CD4-positive, alpha-beta T cell (primary cell): ENCODE measurements at regions of chr5 and their contacts with region 1.

Region 1: GRCh38 chr5:150436141-150436680 is 13.3 kb downstream of the RPS14 start:
- DNase-seq: peak; percentile 81 to 96 (median 90)
- ATAC-seq: peak; percentile 99
- H3K4me3 ChIP-seq: no peak overlapping the region
- H3K4me3 Mint-ChIP-seq: peak overlapping the region; percentile 42
- H3K27ac ChIP-seq: no peak overlapping the region
- H3K27ac Mint-ChIP-seq: peak overlapping the region; percentile 29
- H3K4me1 ChIP-seq: peaks cover 9% of the 10 kb centered on the region
- H3K4me1 Mint-ChIP-seq: peaks cover 7% of the 10 kb centered on the region
- H3K27me3 ChIP-seq: no peaks in the 10 kb centered on the region
- H3K27me3 Mint-ChIP-seq: no peaks in the 10 kb centered on the region
- CTCF ChIP-seq: peak; percentile 83

Region 2: DNA sequence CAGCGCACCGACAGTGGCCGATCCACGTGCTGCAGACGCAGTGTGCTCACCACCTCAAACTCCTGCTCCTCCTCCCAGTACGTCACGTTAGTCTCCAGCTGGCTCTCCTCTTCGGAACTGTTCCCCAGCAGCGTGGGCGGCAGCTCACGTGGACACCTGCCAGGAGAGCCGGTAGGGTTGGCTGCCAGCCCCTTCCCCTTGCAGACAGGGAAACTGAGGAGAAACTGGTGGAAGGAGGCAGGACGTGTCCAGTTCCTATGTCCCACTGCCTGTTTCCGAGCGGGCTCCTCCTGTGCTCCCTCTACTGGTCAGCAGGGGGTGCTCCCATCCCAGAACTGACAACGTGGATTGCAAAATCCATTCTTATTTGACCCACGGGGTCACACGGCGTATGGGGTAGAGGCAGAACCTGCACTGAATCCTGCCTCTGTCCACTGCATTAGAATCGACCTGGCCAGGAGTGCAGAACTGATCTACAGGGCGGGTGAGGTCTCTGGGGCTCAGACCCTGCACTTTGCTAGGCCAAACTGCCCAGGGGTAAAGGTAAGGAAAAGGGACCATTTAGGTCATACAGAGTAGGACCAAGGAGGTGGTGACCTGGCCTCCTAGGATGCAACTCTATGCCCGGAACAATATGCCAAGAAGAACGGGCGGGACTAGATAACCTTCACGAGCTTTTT is 306.3 kb before region 1 on chr5:
- CTCF ChIA-PET with region 1: no interaction called
- POLR2A ChIA-PET with region 1: no interaction called
- intact Hi-C with region 1: loop called in 1 of 2 experiments (anchors 1 kb)
- DNase-seq: peak in 10 of 14 experiments; percentile 5 to 62 (median 16)
- ATAC-seq: peak; percentile 43
- H3K4me3 ChIP-seq: no peak overlapping the region
- H3K4me3 Mint-ChIP-seq: no peak overlapping the region
- H3K27ac ChIP-seq: no peak overlapping the region
- H3K27ac Mint-ChIP-seq: no peak overlapping the region
- H3K4me1 ChIP-seq: peaks cover 4% of the 10 kb centered on the region
- H3K4me1 Mint-ChIP-seq: no peaks in the 10 kb centered on the region
- H3K27me3 ChIP-seq: no peaks in the 10 kb centered on the region
- H3K27me3 Mint-ChIP-seq: no peaks in the 10 kb centered on the region
- CTCF ChIP-seq: peak; percentile 62

Region 3: GRCh38 chr5:150217873-150218692 is 218.1 kb before region 1 on chr5:
- CTCF ChIA-PET with region 1: interaction called, 3 read pairs
- POLR2A ChIA-PET with region 1: no interaction called
- intact Hi-C with region 1: loop called in 1 of 2 experiments (anchors 5 kb)
- DNase-seq: peak; percentile 64 to 86 (median 74)
- ATAC-seq: peak; percentile 93
- H3K4me3 ChIP-seq: no peak overlapping the region
- H3K4me3 Mint-ChIP-seq: no peak overlapping the region
- H3K27ac ChIP-seq: no peak overlapping the region
- H3K27ac Mint-ChIP-seq: no peak overlapping the region
- H3K4me1 ChIP-seq: peaks cover 4% of the 10 kb centered on the region
- H3K4me1 Mint-ChIP-seq: peaks cover 4% of the 10 kb centered on the region
- H3K27me3 ChIP-seq: peaks cover 2 to 6% of the 10 kb centered on the region in 2 experiments
- H3K27me3 Mint-ChIP-seq: peaks cover 17% of the 10 kb centered on the region
- CTCF ChIP-seq: peak; percentile 83

Region 4: DNA sequence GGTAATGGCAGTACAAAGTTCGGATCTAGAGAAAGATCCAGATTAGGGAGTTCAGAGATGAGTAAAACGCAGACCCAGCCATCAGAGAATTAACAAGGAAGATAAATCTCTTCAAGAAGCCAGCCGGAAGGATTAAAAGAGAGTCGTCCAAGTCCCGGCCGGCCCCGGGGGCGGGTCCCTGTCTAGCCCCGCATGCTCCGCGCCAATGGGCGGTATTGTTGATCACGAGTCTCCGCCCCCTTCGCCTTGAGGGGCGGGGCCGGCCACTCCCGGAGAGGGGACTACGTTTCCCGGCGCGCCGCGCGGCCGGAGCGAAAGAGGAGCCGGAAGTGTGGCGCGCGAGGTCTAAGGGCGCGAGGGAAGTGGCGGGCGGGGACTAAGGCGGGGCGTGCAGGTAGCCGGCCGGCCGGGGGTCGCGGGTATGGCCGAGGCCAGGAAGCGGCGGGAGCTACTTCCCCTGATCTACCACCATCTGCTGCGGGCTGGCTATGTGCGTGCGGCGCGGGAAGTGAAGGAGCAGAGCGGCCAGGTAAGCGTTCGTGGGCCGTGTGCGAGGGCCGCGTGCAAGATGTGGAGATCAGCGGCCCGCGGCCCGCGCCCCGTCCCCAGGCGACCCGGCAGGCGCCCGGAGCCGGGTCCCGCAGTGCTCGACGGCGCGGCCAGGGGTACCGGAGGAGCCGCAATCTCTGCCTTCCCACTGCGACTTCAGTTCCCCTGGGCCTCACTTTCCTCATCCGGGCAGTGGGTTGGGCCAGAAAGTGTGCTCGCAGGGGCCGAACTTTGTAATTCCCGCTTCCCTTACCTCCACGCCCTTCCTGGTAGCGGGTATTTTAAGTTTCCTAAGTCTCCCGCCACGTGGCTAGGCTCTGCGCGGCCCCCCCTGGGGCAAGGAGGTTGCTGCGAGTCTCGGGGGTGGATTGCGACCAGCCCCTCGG is 78.6 kb before region 1 on chr5 and contains the start of gene TCOF1:
- CTCF ChIA-PET with region 1: no interaction called
- POLR2A ChIA-PET with region 1: no interaction called
- intact Hi-C with region 1: loop called (anchors 5 kb)
- DNase-seq: peak; percentile 93 to 98 (median 97)
- ATAC-seq: peak; percentile 98
- H3K4me3 ChIP-seq: peak within 1 kb of the TSS; percentile 86
- H3K4me3 Mint-ChIP-seq: peak within 1 kb of the TSS; percentile 89
- H3K27ac ChIP-seq: peak within 1 kb of the TSS in 1 of 2 donors; percentile 46
- H3K27ac Mint-ChIP-seq: peak within 1 kb of the TSS; percentile 73
- H3K4me1 ChIP-seq: peaks cover 28% of the 10 kb centered on the region
- H3K4me1 Mint-ChIP-seq: peaks cover 47% of the 10 kb centered on the region
- H3K27me3 ChIP-seq: no peaks in the 10 kb centered on the region
- H3K27me3 Mint-ChIP-seq: no peaks in the 10 kb centered on the region
- CTCF ChIP-seq: no peak
- total RNA-seq, gene TCOF1: 40.4 to 43.2 TPM

Region 5: GRCh38 chr5:150409638-150410523 is 26.3 kb before region 1 on chr5:
- CTCF ChIA-PET with region 1: interaction called, 27 read pairs
- POLR2A ChIA-PET with region 1: interaction called, 8 read pairs
- intact Hi-C with region 1: loop called (anchors 1 kb)
- DNase-seq: peak in 10 of 14 experiments; percentile 16 to 77 (median 38)
- ATAC-seq: no peak
- H3K4me3 ChIP-seq: peak overlapping the region; percentile 97
- H3K4me3 Mint-ChIP-seq: peak overlapping the region; percentile 99
- H3K27ac ChIP-seq: peak overlapping the region; percentile 94 to 98
- H3K27ac Mint-ChIP-seq: peak overlapping the region; percentile 98
- H3K4me1 ChIP-seq: peaks cover 65% of the 10 kb centered on the region
- H3K4me1 Mint-ChIP-seq: peaks cover 40% of the 10 kb centered on the region
- H3K27me3 ChIP-seq: no peaks in the 10 kb centered on the region
- H3K27me3 Mint-ChIP-seq: no peaks in the 10 kb centered on the region
- CTCF ChIP-seq: no peak